Aorta (tissue), 5 donors: ENCODE measurements at regions of chr1 and their contacts with region 1.

Region 1: DNA sequence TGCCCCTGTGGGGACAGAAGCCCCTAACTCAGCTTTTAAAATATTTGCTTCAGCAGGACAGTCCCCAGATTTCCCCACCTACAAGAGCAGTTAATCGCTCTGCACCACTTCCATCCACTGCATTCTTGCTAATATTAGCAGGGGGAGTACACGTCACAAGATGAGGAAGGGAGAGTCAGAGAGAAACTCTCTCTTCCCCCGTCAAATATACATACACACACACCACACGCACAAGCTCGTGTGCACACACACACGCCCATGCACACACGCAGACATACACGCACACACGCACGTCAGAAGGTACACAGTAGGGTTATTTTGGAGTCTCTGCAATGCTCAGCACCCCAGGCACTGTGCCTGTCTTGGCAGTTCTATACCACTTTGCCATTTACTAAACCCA is 2.1 kb downstream of the CLCA1 start:
- DNase-seq: no peak
- ATAC-seq: no peak
- H3K4me3 ChIP-seq: no peak overlapping the region
- H3K27ac ChIP-seq: no peak overlapping the region
- H3K4me1 ChIP-seq: no peaks in the 10 kb centered on the region
- H3K27me3 ChIP-seq: no peaks in the 10 kb centered on the region

Region 2: GRCh38 chr1:86137436-86137835 is 333.4 kb before region 1 on chr1:
- intact Hi-C with region 1: no loop called
- DNase-seq: no peak
- ATAC-seq: no peak
- H3K4me3 ChIP-seq: no peak overlapping the region
- H3K27ac ChIP-seq: no peak overlapping the region
- H3K4me1 ChIP-seq: no peaks in the 10 kb centered on the region
- H3K27me3 ChIP-seq: no peaks in the 10 kb centered on the region

Region 3: DNA sequence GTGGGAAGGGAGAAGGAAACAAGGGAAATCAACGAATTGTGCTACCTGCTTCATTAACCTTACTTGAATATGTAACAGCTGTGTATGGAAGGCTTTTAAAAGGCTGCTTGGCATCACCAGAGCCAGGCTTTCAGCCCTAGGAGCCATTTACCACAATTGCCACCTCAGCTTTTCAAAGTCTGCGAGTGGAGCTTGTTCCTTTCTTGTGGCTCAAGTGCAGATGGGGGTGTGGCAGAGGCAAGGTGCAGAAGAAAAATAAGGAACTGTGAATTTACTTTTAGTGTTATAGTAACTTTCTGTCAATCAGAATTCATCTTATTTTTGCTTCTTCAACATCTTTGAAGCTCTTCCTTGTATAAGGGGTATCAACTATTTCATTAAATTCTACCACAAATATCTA is 29.3 kb before region 1 on chr1:
- intact Hi-C with region 1: no loop called
- DNase-seq: no peak
- ATAC-seq: no peak
- H3K4me3 ChIP-seq: no peak overlapping the region
- H3K27ac ChIP-seq: no peak overlapping the region
- H3K4me1 ChIP-seq: no peaks in the 10 kb centered on the region
- H3K27me3 ChIP-seq: no peaks in the 10 kb centered on the region

Region 4: DNA sequence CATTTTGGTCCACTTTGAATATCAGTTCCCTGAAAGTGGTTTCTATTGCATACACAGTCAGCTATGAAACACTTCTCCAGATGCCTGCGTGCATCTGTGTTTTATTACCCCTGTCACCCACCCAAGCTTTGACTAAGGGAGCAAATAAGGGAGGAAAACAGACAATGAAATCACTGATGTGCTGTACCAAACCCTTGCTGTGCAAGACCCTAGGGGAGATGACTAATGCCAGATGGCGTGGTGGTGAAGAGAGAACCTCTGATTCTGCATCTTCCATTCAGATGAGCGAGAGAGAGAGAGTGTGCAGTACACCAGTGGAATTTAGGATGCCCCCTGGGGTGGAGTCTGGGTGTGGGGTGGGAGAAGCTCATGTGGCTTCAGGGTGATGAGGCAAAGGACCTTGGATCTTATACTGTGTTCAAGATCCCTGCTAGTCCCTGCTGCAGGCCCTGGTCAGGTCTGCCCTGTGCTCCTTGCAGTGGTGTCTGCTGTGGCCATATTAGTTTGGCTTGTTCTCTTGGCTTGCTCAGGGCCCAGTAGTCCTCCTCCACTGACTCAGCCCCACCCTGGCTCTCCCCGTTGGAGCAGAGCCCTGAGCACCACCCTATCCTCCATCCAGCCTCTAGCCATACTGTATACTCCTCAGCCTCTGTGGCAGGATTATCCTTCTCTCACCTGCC is 16.4 kb after region 1 on chr1:
- intact Hi-C with region 1: no loop called
- DNase-seq: no peak
- ATAC-seq: peak; percentile 79
- H3K4me3 ChIP-seq: no peak overlapping the region
- H3K27ac ChIP-seq: no peak overlapping the region
- H3K4me1 ChIP-seq: no peaks in the 10 kb centered on the region
- H3K27me3 ChIP-seq: no peaks in the 10 kb centered on the region

Region 5: DNA sequence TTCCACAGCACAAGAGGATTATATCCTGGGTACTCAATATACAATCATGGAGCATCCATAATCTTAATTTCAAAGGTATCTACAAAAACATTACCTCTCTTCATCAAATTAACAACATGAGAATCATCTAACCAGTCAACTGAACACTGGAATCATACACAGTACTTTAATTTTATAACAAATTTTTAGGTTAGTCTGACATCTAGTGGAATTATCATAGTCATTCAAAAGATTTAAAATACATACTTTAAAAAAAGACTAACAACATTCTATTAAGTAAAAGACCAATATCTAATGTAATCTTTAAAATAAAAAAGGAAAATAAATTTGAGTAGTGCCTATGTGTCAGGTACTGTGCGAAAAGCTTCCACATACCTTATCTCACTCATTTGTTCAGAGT is 216.7 kb after region 1 on chr1:
- intact Hi-C with region 1: loop called in 1 of 2 experiments (anchors 5 kb)
- DNase-seq: no peak
- ATAC-seq: no peak
- H3K4me3 ChIP-seq: no peak overlapping the region
- H3K27ac ChIP-seq: no peak overlapping the region
- H3K4me1 ChIP-seq: no peaks in the 10 kb centered on the region
- H3K27me3 ChIP-seq: no peaks in the 10 kb centered on the region

Region 6: DNA sequence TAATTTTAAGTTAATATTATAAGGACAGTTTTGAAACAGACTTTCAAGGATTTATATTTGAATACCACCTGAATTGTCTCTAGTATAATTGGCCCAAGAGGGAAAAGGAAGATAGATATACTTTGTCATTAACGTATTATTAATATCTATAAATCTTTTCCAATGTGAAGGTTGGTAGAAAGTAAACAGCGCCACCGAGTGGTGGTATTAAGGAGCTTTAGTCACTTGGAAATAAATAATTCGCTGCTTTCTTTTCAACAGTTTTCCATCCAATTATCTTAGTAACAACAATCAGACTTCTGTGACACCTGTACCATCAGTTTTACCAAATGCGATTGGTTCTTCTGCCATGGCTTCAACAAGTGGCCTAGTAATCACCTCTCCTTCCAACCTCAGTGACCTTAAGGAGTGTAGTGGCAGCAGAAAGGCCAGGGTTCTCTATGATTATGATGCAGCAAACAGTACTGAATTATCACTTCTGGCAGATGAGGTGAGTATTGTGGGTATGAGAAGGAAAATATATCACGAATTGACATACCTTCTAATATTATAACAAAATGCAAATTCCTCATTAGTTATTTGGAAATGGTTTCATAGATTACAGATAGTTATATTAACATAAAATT is 271.2 kb after region 1 on chr1:
- intact Hi-C with region 1: loop called in 1 of 2 experiments (anchors 5 kb)
- DNase-seq: no peak
- ATAC-seq: no peak
- H3K4me3 ChIP-seq: no peak overlapping the region
- H3K27ac ChIP-seq: no peak overlapping the region
- H3K4me1 ChIP-seq: no peaks in the 10 kb centered on the region
- H3K27me3 ChIP-seq: no peaks in the 10 kb centered on the region

Region 7: DNA sequence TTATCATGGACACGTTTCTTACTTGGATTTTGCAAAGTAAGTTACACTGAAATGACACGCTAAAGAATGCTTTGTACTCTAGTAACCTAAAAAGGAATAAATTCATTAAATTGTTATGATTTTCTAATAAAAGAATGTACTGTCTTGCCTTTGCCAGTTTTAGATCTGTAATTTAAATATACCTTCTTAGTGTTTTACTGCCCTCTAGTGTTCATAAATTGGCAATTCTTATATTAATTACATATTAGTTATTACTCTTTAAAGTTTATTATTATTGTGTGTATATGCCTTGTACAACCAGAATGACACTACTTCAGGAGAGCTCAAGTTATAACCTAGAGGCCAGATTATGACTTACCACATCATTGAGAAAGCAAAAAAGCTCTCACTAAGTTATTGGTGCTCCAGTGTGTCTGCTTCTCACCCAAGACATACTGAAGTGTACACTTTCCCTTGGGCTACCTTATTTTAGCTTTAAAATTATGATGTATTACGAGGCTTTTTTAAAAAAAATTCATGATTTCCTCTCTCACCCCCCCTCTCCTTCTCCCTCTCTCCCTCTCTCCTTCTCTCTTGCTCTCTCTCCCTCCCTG is 613.5 kb after region 1 on chr1:
- intact Hi-C with region 1: loop called in 1 of 2 experiments (anchors 10 kb)
- DNase-seq: no peak
- ATAC-seq: peak; percentile 59
- H3K4me3 ChIP-seq: no peak overlapping the region
- H3K27ac ChIP-seq: no peak overlapping the region
- H3K4me1 ChIP-seq: no peaks in the 10 kb centered on the region
- H3K27me3 ChIP-seq: no peaks in the 10 kb centered on the region